ENCODE measurements at regions of chr15 and their contacts with region 1.

Region 1: DNA sequence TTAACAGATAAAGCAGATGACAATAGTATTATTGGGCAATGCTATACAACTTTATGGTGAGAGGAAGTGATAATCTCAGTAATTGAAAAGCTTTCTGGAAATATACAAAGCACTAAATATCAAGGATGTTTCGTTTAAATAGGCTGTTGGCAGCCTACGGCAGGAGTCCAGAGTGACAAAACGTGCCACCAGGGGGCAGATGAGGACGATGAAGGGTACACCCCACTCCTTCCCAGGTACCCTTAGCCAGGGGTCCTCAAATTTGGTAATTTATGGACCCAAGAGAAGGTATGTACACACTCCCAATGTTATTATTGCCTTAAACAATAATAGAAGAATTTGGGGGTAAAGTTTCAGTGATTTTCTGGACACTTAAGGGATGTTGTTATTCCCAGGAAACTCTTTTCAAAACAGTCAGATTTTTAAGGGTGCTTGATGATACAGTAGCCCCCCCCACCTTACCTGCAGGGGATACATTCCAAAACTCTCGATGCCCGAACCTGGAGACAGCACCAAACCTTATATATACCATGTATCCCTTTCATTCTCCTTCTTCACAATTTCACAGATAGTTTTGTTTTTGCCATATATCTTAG is 1.4 kb upstream of the MAGEL2 start:
- DNase-seq: no peak
- ATAC-seq: peak; percentile 57; the same call in 1 of the 2 replicates
- H3K4me3 ChIP-seq: no peak overlapping the region
- H3K27ac ChIP-seq: no peak overlapping the region
- H3K4me1 ChIP-seq: no peaks in the 10 kb centered on the region
- H3K27me3 ChIP-seq: no peaks in the 10 kb centered on the region
- CTCF ChIP-seq: peak in 2 of 3 experiments; percentile 54 to 61; a peak in 4 of 6 replicates
- POLR2A ChIP-seq: no peak
- RAD21 ChIP-seq: peak; percentile 16; the same call in 1 of the 2 replicates

Region 2: DNA sequence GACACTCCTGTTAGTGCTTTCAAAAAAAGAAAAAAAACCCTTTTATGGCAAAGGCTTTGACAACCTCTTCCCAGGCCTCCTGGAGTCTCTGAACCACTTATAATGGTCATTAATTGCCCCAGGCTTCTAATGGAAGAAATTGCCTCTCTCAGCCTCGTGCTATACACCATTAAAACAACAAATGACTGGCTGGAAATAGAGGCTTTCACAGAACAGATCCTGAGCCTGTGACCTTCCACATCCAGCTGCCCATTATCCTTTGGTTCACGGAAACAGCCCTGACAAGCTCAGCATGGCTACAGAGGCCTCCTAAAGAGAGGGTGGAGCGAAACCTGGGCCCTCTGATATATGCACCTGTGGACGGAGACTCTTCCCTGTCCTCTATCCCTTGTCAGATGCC is 110.4 kb before region 1 on chr15:
- CTCF ChIA-PET with region 1: no interaction called
- POLR2A ChIA-PET with region 1: no interaction called
- RAD21 ChIA-PET with region 1: no interaction called
- intact Hi-C with region 1: no loop called
- DNase-seq: no peak
- ATAC-seq: no peak
- H3K4me3 ChIP-seq: no peak overlapping the region
- H3K27ac ChIP-seq: no peak overlapping the region
- H3K4me1 ChIP-seq: no peaks in the 10 kb centered on the region
- H3K27me3 ChIP-seq: peaks cover 19% of the 10 kb centered on the region
- CTCF ChIP-seq: no peak
- POLR2A ChIP-seq: no peak
- RAD21 ChIP-seq: no peak

Region 3: GRCh38 chr15:25501828-25502446 is 1852.9 kb after region 1 on chr15:
- CTCF ChIA-PET with region 1: no interaction called
- POLR2A ChIA-PET with region 1: no interaction called
- RAD21 ChIA-PET with region 1: no interaction called
- intact Hi-C with region 1: loop called (anchors 5 kb)
- DNase-seq: peak; percentile 27
- ATAC-seq: peak; percentile 38; the same call in 1 of the 2 replicates
- H3K4me3 ChIP-seq: no peak overlapping the region
- H3K27ac ChIP-seq: no peak overlapping the region
- H3K4me1 ChIP-seq: no peaks in the 10 kb centered on the region
- H3K27me3 ChIP-seq: no peaks in the 10 kb centered on the region
- CTCF ChIP-seq: peak in 2 of 3 experiments; percentile 42 to 63; a peak in 4 of 6 replicates
- POLR2A ChIP-seq: no peak
- RAD21 ChIP-seq: no peak; the same call in 1 of the 2 replicates

Measured in HCT116 (cell line).